ENCODE measurements at regions of chr18 and their contacts with region 1.

Region 1: DNA sequence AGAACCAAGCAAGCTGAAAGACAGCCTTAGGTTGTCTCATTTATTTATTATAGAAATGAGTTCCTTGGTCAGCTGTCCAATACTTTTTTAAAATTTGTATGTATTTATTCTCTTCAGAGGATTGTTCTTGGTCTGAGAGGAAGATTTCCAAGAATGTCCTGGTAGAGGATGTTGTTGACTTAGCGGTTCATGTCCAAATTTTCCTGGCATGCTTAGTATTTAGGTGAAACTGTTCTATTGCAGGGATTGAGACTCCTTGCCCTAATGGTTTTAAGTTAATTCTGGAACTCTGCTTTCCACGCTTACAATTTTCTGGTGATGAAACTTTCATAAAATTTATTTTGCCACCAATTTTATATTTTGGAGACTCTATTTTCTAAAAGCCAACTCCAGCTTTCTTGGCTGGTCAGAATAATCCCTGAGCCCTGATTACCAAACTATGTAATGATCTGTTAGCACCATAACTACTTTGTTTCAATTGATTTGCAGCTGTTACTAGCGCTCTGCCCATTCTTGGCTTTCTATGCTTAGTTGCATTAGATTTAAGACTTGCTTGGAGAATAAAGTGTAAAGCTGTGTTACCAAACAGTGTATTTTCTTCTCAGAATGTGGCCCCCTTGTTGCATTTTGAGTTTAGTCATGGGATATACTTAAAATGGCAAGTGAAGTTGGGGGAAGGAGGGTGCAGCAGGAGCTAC is 1868.8 kb upstream of the CELF4 start:
- DNase-seq: no peak
- ATAC-seq: no peak
- H3K4me3 ChIP-seq: no peak overlapping the region
- H3K27ac ChIP-seq: no peak overlapping the region
- H3K4me1 ChIP-seq: no peaks in the 10 kb centered on the region
- H3K27me3 ChIP-seq: no peaks in the 10 kb centered on the region
- CTCF ChIP-seq: no peak
- EP300 ChIP-seq: no peak
- POLR2A ChIP-seq: no peak
- RAD21 ChIP-seq: no peak

Region 2: GRCh38 chr18:39375066-39375465 is 59.3 kb before region 1 on chr18:
- CTCF ChIA-PET with region 1: no interaction called
- POLR2A ChIA-PET with region 1: no interaction called
- RAD21 ChIA-PET with region 1: no interaction called
- SMC1A ChIA-PET with region 1: no interaction called
- in situ Hi-C with region 1: no loop called
- intact Hi-C with region 1: loop called (anchors 10 kb)
- DNase-seq: no peak
- ATAC-seq: no peak
- H3K4me3 ChIP-seq: no peak overlapping the region
- H3K27ac ChIP-seq: no peak overlapping the region
- H3K4me1 ChIP-seq: no peaks in the 10 kb centered on the region
- H3K27me3 ChIP-seq: no peaks in the 10 kb centered on the region
- CTCF ChIP-seq: no peak
- EP300 ChIP-seq: no peak
- POLR2A ChIP-seq: no peak
- RAD21 ChIP-seq: no peak